Posterior cingulate gyrus (tissue), 11 donors: ENCODE measurements at regions of chr2 and their contacts with region 1.

Region 1: GRCh38 chr2:30095402-30095801 is 51.4 kb upstream of the YPEL5 start:
- DNase-seq: no peak

Region 2: DNA sequence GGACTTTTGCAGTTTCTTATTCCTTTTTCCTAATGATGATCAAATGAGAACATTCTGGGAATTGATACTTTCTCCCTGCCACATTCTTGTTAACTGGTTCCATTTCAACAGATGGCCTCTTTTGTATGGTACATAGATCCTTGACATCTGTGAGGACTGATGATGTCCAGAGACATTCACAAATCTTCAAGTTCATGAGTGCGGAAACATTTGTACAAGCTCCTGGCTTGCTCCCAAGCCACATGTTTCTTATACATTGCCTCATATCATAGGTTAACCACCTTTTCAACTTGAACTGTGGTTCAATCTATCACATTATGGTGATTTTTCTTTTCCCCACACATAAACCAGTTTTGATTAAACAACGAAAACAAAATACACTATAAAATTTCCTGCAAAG is 712.9 kb before region 1 on chr2:
- intact Hi-C with region 1: no loop called
- DNase-seq: no peak

Region 3: DNA sequence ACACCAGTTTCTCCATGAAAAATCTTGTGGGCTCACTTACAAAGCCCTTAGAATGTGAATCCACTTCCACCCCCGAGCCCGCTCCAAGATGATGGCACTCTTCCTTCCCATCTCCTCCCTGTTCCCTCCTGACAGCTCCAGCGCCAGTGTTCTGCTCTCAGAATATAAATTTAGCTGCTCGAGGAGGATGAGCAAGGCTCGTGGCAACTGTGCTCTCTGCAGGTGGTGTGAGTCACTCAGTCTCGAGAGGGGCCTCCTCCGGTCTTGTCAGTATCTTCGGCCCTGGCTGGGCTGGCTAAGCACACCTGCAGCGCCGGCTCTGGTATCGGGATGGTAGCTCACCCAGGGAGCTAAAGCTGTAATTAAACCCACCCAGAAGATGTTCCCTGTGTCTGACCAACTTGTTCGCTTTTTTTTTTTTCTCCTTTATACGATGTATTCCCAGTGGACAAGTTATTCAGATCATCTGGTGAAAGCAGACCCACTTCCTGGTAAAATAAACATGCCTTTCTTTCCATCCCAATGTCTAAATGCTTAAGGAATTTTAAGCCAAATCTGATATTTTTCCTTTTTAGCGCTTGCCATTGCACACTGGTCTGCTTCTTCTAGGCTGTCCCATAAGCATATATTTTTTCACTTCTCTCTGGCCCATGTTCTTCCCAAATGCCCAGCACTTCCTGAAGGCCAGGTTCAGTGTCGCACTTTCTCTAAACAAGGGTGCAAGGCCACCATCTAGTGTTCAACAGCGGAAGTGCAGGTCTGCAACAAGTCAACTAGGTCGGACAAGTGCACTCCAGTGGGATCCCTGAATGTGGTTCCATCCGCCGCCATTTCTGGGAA is 20.0 kb after region 1 on chr2:
- intact Hi-C with region 1: loop called (anchors 1 kb)
- DNase-seq: peak; percentile 70 to 97 (median 91)

Region 4: GRCh38 chr2:30580391-30580790 is 485.0 kb after region 1 on chr2:
- intact Hi-C with region 1: no loop called
- DNase-seq: no peak